AG04450 (cell line): ENCODE measurements at regions of chr16 and their contacts with region 1.

Region 1: GRCh38 chr16:57462209-57462977 is at the start of gene POLR2C:
- DNase-seq: peak; percentile 51
- H3K4me3 ChIP-seq: peak within 1 kb of the TSS; percentile 89
- H3K27ac ChIP-seq: peak within 1 kb of the TSS; percentile 31
- H3K27me3 ChIP-seq: no peaks in the 10 kb centered on the region
- CTCF ChIP-seq: peak; percentile 84
- polyA plus RNA-seq, gene POLR2C: 143 and 149 TPM in 2 replicates

Region 2: GRCh38 chr16:57447186-57447962 is 15.0 kb before region 1 on chr16 and contains the starts of genes CIAPIN1 and COQ9:
- CTCF ChIA-PET with region 1: interaction called, 16 read pairs
- POLR2A ChIA-PET with region 1: interaction called, 15 read pairs
- DNase-seq: peak; percentile 77
- H3K4me3 ChIP-seq: peak within 1 kb of the TSS; percentile 92
- H3K27ac ChIP-seq: peak within 1 kb of the TSS; percentile 65
- H3K27me3 ChIP-seq: no peaks in the 10 kb centered on the region
- CTCF ChIP-seq: no peak
- polyA plus RNA-seq, gene CIAPIN1: 48.6 and 49.7 TPM in 2 replicates
- polyA plus RNA-seq, gene COQ9: 59.0 and 60.3 TPM in 2 replicates

Region 3: DNA sequence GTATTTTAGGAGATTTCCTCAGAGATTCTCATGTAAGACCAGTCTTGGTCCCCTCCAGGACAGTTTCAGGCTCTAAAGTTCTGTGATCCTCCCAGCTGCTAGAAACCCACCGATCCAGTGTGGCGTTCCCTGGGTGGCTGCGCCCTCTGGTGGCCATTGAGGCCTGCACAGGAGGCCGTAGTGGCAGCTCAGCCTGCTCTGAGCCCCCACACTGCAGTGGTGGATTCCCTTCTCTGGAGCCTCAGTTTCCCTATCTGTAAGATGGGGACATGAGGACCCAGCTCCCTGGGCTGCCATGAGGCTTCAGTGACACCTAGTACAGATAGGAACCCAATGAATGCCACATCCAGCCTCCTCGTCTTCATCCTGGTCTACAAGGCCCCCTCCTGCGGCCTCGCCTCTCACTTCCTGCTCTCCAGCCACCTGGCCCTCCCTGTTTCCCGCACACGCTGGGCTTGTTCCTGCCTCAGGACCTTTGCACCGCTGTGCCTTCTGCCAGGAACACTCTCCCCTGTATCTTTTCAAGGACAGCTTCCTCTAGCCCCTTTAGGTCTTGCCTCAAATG is 57.5 kb after region 1 on chr16:
- CTCF ChIA-PET with region 1: interaction called, 14 read pairs
- POLR2A ChIA-PET with region 1: interaction called, 3 read pairs
- DNase-seq: no peak
- H3K4me3 ChIP-seq: no peak overlapping the region
- H3K27ac ChIP-seq: no peak overlapping the region
- H3K27me3 ChIP-seq: no peaks in the 10 kb centered on the region
- CTCF ChIP-seq: peak; percentile 99